Caco-2 (cell line): ENCODE measurements at regions of chr6 and their contacts with region 1.

Region 1: DNA sequence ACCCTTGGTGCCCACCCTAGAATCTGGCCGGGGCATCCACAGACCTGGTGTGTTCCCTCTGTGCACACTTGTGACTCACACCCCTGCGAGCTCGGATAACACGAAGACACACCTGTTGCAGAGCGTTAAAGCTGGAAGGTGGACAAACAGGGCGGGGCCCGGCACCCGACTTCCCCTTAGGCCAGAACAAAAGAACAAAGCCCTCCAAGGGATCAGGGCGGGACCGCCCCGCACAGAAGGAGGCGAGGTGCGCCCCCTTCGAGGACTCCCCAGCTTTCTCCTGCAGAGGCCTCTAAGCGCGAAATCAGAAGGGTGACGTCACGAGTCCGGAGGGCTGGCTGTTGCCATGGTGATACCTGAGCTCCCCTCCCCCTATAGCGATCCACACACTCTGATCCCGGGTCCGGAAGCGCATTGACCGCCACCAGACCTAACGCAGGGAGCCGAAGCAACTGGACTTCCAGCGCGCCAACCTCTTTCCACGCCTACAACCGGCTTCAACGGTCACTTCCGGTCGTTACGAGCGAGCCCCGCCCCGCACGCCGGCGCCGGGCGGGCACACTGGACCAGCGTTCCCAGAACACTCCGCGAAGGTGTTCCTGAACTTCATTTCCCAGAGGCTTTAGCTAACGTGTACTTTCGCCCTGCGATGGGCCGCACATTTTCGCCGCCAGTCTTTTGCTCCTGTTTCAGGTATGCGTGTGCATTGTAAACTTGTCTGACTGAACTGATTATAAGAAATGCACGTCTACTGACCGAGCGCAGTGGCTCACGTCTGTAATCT is at the start of gene ZNF184:
- DNase-seq: peak; percentile 97 to 98
- H3K4me3 ChIP-seq: peak within 1 kb of the TSS; percentile 69
- H3K4me3 Mint-ChIP-seq: peak within 1 kb of the TSS; percentile 96
- H3K27ac Mint-ChIP-seq: peak within 1 kb of the TSS; percentile 95
- H3K4me1 ChIP-seq: peaks cover 3% of the 10 kb centered on the region; the same call in 1 of the 2 replicates
- H3K4me1 Mint-ChIP-seq: peaks cover 6% of the 10 kb centered on the region
- H3K27me3 ChIP-seq: no peaks in the 10 kb centered on the region
- H3K27me3 Mint-ChIP-seq: no peaks in the 10 kb centered on the region
- CTCF ChIP-seq: peak in 1 of 2 experiments; percentile 18
- total RNA-seq, gene ZNF184: 3.9 and 4.4 TPM in 2 replicates

Region 2: DNA sequence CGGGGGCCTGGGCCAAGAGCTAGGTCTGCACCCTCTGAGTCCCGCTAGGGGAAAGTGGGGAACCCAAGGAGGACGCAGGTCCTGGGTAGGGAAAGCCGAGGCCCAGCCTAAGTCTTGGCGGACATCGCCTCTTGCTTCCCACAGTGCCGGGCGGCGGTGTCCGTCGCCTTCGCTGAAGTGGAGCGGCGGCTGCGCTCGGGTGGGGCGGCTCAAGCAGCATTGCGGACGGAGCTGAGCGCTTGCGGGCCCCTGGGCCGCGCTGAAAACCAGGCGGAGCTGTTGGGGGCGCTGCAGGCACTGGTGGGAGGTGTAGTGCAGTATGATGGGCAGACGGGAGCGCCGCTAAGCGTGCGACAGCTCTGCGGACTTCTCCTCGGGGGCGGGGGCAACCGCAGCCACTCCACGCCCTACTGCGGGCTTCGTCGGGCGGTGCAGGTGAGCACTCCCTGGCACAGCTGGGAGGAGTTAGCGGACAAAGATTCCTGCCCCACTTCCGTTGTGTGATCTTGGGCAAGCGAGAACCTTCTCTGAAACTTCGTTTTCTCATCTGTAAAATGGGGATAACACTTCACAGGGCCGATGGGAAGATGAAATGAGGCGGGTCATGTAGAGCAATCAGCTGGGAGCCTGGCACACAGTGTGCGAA is 221.1 kb before region 1 on chr6:
- CTCF ChIA-PET with region 1: interaction called, 7 read pairs
- POLR2A ChIA-PET with region 1: interaction called, 15 read pairs
- intact Hi-C with region 1: no loop called
- DNase-seq: peak; percentile 94
- H3K4me3 ChIP-seq: peak overlapping the region; percentile 84
- H3K4me3 Mint-ChIP-seq: peak overlapping the region; percentile 97
- H3K27ac Mint-ChIP-seq: peak overlapping the region; percentile 93
- H3K4me1 ChIP-seq: peaks cover 7% of the 10 kb centered on the region; the same call in 1 of the 2 replicates
- H3K4me1 Mint-ChIP-seq: peaks cover 13% of the 10 kb centered on the region
- H3K27me3 ChIP-seq: no peaks in the 10 kb centered on the region
- H3K27me3 Mint-ChIP-seq: no peaks in the 10 kb centered on the region
- CTCF ChIP-seq: peak; percentile 52 to 77

Region 3: DNA sequence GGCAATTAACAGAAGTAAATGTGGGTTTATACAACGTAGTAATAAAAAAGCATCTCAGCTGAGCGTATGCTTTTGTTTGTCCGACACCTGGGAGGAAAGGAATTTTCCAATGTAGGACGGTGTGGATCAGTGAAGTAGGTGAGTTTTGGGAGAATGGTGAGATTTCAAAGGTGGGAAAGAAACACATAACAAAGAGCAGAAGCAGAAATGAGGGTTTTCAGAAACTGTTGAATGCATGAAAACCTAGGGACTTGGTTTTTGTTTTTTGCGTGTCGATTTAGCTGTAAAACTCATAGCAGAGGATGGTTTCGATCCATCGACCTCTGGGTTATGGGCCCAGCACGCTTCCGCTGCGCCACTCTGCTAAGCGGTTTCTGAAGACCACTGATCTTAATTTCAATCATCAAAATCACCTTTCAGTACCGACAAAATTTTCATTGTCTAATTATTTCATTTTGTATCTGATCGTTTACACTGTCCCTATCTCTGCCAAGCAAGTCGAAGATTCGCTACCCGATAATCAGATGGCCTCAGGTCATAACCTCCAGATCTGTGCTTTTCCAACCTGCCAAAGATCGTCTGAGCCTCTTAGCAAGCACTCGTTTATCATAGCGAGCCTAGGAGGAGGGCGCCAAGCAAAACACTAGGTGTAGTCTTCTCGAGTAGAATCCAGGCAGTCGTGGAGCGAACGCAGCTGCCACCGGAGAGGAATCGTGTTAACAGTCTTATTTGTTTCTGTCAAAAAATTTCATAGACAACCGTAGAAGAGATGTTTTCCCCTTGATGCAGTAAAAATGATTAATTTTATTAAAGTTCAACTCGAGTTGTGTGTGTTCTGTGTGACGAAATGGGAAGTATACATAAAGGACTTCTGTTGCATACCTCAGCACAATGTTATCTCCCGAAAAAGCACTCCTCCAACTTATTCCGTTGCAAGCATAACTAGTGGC is 139.8 kb before region 1 on chr6:
- CTCF ChIA-PET with region 1: no interaction called
- POLR2A ChIA-PET with region 1: no interaction called
- intact Hi-C with region 1: loop called (anchors 5 kb)
- DNase-seq: peak; percentile 42 to 55
- H3K4me3 ChIP-seq: peak overlapping the region; percentile 39
- H3K4me3 Mint-ChIP-seq: peak overlapping the region; percentile 80
- H3K27ac Mint-ChIP-seq: peak overlapping the region; percentile 88
- H3K4me1 ChIP-seq: peaks cover 4% of the 10 kb centered on the region
- H3K4me1 Mint-ChIP-seq: peaks cover 13% of the 10 kb centered on the region
- H3K27me3 ChIP-seq: no peaks in the 10 kb centered on the region
- H3K27me3 Mint-ChIP-seq: no peaks in the 10 kb centered on the region
- CTCF ChIP-seq: no peak

Region 4: GRCh38 chr6:27388293-27389197 is 84.3 kb before region 1 on chr6 and contains the start of gene ZNF391:
- CTCF ChIA-PET with region 1: interaction called, 5 read pairs
- POLR2A ChIA-PET with region 1: no interaction called
- intact Hi-C with region 1: loop called (anchors 5 kb)
- DNase-seq: peak; percentile 83 to 88
- H3K4me3 ChIP-seq: peak within 1 kb of the TSS; percentile 75
- H3K4me3 Mint-ChIP-seq: peak within 1 kb of the TSS; percentile 92
- H3K27ac Mint-ChIP-seq: peak within 1 kb of the TSS; percentile 92
- H3K4me1 ChIP-seq: peaks cover 3% of the 10 kb centered on the region; the same call in 1 of the 2 replicates
- H3K4me1 Mint-ChIP-seq: peaks cover 6% of the 10 kb centered on the region
- H3K27me3 ChIP-seq: no peaks in the 10 kb centered on the region
- H3K27me3 Mint-ChIP-seq: no peaks in the 10 kb centered on the region
- CTCF ChIP-seq: no peak
- total RNA-seq, gene ZNF391: 5.0 TPM in 2 replicates